Stomach (tissue), 19 donors: ENCODE measurements at regions of chr16 and their contacts with region 1.

Region 1: DNA sequence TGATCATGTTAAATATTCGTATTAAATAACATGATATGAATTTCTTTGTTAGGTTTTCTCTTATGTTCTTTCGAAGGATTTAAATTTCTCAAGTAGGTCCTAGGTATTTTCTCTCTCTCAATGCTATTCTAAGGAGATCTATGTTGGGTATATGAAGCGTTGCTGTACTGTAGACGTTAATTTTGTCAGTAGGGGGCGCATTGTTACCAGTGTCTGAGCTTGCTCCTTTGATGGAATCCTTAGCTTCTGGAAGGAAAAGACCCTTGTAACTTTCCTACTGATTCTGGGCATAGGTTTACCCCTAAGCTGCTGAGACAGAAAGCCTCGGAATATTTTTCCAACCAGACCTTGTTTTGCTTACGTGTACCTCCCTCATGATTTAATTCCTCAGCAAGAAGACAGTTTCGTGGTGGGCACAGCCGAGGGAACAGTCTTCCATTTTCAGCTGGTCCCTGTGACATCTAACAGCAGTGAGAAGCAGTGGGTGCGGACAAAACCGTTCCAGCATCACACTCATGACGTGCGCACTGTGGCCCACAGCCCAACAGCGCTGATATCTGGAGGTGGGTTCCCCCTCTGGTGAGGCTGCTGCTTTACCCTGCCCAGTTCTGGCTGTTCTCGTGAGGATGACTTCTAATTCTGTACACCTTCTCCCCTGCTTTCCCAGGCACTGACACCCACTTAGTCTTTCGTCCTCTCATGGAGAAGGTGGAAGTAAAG is 17.9 kb downstream of the UTP4 start:
- DNase-seq: peak; percentile 53 to 92
- H3K4me3 ChIP-seq: no peak overlapping the region
- H3K27ac ChIP-seq: no peak overlapping the region
- H3K4me1 ChIP-seq: peaks cover 0 to 8% (median 2%) of the 10 kb centered on the region in 4 donors
- H3K27me3 ChIP-seq: no peaks in the 10 kb centered on the region
- CTCF ChIP-seq: peak in 5 of 7 experiments; percentile 59 to 82 (median 63)
- EP300 ChIP-seq: no peak
- POLR2A ChIP-seq: no peak

Region 2: GRCh38 chr16:69040138-69040909 is 110.0 kb before region 1 on chr16:
- intact Hi-C with region 1: no loop called
- DNase-seq: no peak
- H3K4me3 ChIP-seq: no peak overlapping the region
- H3K27ac ChIP-seq: no peak overlapping the region
- H3K4me1 ChIP-seq: peaks cover 0 to 4% (median 0%) of the 10 kb centered on the region in 4 donors
- H3K27me3 ChIP-seq: no peaks in the 10 kb centered on the region
- CTCF ChIP-seq: no peak
- EP300 ChIP-seq: no peak
- POLR2A ChIP-seq: no peak

Region 3: DNA sequence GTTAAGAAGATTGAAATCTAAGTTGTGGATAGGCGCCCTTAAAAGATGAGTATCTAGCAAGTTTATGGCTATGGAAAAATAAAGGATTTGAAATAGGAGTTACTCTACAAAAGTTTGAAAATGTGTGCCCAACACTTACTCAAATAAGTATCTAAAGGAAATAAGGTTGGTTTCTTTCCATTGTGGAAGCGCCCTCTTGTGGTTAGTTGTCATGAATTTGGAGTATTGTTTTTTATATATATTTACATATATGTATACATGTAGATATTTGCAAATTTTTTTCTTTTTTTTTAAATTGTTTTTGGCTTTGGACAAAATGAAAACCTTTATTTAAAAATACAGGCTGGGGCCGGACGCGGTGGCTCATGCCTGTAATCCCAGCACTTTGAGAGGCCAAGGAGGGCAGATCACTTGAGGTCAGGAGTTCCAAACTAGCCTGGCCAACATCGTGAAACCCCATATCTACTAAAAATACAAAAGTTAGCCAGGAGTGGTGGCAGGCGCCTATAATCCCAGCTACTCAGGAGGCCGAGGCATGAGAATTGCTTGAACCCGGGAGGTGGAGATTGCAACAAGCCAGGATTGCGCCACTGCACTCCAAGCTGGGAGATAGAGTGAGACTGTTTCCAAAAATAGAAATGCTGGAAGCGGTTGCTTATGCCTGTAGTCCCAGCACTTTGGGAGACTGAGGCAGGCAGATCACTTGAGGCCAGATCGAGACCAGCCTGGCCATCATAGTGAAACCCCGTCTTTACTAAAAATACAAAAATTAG is 136.8 kb after region 1 on chr16:
- intact Hi-C with region 1: loop called (anchors 5 kb)
- DNase-seq: peak in 1 of 2 donors; percentile 87
- H3K4me3 ChIP-seq: no peak overlapping the region
- H3K27ac ChIP-seq: peak overlapping the region in 2 of 5 donors; percentile 20 to 27
- H3K4me1 ChIP-seq: peaks cover 0 to 12% (median 8%) of the 10 kb centered on the region in 4 donors
- H3K27me3 ChIP-seq: no peaks in the 10 kb centered on the region
- CTCF ChIP-seq: peak in 5 of 7 experiments; percentile 29 to 84 (median 45)
- EP300 ChIP-seq: no peak
- POLR2A ChIP-seq: no peak

Region 4: GRCh38 chr16:69310653-69311532 is 160.6 kb after region 1 on chr16 and contains the start of gene VPS4A:
- intact Hi-C with region 1: no loop called
- DNase-seq: peak; percentile 97 to 99
- H3K4me3 ChIP-seq: peak within 1 kb of the TSS; percentile 92 to 97 (median 94)
- H3K27ac ChIP-seq: peak within 1 kb of the TSS; percentile 88 to 98 (median 93)
- H3K4me1 ChIP-seq: peaks cover 28 to 48% (median 41%) of the 10 kb centered on the region in 4 donors
- H3K27me3 ChIP-seq: no peaks in the 10 kb centered on the region
- CTCF ChIP-seq: peak in 5 of 7 experiments; percentile 64 to 99 (median 95)
- EP300 ChIP-seq: no peak
- POLR2A ChIP-seq: no peak
- total RNA-seq, gene VPS4A: 4.1 to 51.0 (median 33.9) TPM

Region 5: DNA sequence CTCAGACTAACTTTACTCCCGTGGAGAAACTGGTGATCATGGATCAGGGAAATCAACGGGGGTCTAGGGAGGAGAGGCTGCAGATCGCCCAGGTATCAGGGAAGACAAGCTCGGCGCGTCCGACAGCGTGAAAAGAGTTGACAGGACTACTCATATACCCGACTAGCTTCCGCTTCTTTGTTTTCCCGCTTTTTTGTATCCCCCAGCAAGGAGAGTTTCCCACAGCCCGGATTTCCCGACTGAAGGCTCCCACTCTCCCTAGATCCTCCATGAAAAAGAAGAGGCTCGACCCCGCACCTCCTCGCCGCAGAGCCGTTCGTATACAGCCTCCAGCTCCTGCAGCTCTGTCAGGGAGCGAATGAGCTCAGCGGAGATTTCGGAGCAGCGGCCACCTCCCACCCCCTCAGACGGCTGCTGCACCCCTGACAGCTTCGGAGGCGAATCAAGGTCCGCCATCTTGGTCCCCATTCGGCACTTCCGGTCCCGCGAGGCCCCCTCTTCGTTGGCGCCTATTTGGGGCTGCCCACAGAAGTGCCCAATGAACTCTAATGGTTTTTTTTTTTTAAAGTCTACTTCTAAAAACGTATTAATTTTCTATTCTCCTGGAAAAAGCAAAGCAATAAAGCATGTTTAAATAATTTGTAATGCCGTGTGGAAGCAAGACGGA is 1372.9 kb after region 1 on chr16 and contains the start of gene COG4:
- intact Hi-C with region 1: no loop called
- DNase-seq: peak; percentile 86 to 96
- H3K4me3 ChIP-seq: peak within 1 kb of the TSS; percentile 74 to 95 (median 80)
- H3K27ac ChIP-seq: peak within 1 kb of the TSS; percentile 82 to 93 (median 92)
- H3K4me1 ChIP-seq: peaks cover 31 to 63% (median 53%) of the 10 kb centered on the region in 4 donors
- H3K27me3 ChIP-seq: no peaks in the 10 kb centered on the region
- CTCF ChIP-seq: no peak
- EP300 ChIP-seq: no peak
- POLR2A ChIP-seq: no peak
- total RNA-seq, gene COG4: 10.7 to 127 (median 86.9) TPM